ENCODE measurements at regions of chr6 and their contacts with region 1.

Region 1: GRCh38 chr6:123802697-123803496 is 768 bp upstream of the NKAIN2 start:
- DNase-seq: peak; percentile 91

Region 2: GRCh38 chr6:123655521-123656306 is 147.2 kb before region 1 on chr6:
- CTCF ChIA-PET with region 1: no interaction called
- POLR2A ChIA-PET with region 1: no interaction called
- DNase-seq: no peak

Region 3: DNA sequence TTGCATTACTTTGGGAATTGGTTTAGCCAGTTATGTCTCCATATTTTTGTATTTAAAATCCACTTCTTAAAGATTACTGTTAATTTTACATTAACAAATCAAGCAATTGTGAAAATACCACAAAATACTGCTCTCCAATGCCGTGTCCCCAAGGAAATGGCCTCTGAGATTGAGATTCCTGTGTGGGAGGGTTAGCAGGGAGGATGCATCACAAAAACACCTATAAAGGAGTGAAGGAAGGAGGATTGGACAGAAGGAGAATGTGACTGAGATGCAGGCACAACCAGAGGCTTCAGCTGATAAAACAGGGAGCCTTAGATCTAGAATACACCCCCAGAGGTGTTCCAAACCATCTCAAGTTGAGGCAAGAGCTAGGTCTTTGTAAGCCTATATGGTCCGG is 33.5 kb before region 1 on chr6:
- CTCF ChIA-PET with region 1: no interaction called
- POLR2A ChIA-PET with region 1: no interaction called
- DNase-seq: no peak

Region 4: DNA sequence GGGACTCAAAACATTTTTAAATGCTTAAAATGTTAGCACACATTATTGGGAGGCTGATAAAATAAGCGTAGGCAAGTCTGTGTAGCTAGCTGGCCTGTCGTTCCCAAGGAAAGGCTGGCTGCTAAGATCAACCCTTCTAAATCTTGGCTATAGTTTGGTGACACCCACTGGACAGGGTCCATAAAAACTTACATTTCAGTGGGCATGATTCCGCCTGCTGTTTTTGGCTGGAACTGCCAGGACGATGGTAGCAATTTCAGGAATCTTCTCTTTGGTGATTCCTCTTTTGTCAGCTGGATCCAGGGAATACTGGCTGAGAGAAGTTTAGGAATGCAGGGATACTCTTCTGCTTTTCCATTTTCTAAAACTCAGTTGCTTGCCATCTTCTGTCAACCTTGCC is 163.0 kb after region 1 on chr6:
- CTCF ChIA-PET with region 1: interaction called, 18 read pairs
- POLR2A ChIA-PET with region 1: no interaction called
- DNase-seq: peak; percentile 62

Region 5: DNA sequence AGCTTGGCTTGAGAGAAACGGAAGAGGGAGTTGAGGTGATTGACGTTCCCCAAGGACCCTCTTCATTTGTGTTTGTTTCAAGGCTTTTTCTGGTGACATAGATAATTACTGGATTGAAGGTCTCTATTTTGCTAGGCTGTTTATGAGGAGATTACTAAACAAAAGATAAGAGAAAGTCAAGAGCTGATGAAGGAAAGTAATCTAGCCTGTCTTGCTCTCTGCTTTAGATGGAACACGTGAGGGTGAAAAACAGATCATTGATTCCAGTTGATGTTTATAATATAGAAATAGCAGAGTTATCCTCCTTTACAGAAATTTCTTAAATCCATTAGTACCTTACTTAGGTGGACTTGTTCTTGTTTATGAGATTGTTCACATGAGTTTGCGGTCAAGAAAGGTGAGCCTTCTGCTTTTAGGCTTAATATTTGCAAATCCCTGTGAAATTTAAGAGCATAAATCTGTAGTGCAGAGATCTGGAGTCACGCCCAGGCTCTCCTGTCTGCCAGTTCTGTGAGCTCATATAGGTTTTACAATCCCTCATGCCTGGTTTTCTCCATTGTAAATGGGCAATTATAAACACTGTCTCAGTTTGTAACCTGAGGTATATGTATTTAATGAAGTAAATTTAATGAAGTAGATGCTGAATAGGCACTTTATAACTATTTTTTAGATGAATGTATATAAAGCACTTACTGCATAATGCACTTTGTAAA is 273.6 kb after region 1 on chr6:
- CTCF ChIA-PET with region 1: interaction called, 11 read pairs
- POLR2A ChIA-PET with region 1: interaction called, 3 read pairs
- DNase-seq: peak; percentile 44

Measured in HEK293T (cell line).